GM12878 (cell line): ENCODE measurements at regions of chr4 and their contacts with region 1.

Region 1: DNA sequence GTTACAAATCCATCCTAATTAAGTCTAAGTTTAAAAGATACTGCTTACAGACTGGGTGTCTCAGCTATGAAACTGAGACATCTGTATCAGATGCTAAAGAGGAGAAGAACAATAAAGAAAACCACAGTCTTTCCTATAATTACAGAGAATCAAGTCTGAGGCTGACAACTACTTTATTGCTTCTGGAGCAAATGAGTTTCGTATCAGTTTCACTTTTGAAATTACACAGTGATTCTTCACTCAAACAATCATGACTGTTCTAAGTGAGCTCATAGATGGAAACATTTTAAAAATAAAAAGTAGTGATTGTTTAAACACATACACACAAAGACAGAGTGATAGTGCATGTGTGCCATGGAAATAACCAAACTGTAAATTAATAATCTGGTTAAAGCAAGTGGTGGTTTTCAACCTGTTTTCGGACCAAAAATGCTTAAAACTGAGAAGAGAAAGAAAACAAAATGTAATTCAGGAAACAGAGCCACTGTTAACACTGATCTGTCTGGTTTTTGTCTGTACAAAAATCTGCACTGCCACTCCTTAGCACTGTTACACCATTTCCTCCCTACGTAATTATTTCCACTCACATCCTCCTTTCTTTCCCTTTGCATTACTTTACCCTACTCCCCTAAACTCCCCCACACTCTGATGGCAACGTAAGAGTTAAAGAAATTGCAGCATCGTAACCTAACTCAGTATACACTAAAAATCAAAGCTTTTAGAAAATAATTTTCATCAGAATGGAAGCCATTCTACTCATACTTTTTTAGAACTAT is 12.5 kb downstream of the RFC1 start:
- DNase-seq: peak; percentile 85
- ATAC-seq: peak; percentile 85
- H3K4me3 ChIP-seq: peak overlapping the region; percentile 48; the same call in 1 of the 2 replicates
- H3K27ac ChIP-seq: peak overlapping the region; percentile 70
- H3K4me1 ChIP-seq: peaks cover 42% of the 10 kb centered on the region
- H3K27me3 ChIP-seq: no peaks in the 10 kb centered on the region
- CTCF ChIP-seq: no peak
- EP300 ChIP-seq: peak; percentile 75 to 77; a peak in 3 of 4 replicates
- POLR2A ChIP-seq: no peak
- RAD21 ChIP-seq: no peak

Region 2: DNA sequence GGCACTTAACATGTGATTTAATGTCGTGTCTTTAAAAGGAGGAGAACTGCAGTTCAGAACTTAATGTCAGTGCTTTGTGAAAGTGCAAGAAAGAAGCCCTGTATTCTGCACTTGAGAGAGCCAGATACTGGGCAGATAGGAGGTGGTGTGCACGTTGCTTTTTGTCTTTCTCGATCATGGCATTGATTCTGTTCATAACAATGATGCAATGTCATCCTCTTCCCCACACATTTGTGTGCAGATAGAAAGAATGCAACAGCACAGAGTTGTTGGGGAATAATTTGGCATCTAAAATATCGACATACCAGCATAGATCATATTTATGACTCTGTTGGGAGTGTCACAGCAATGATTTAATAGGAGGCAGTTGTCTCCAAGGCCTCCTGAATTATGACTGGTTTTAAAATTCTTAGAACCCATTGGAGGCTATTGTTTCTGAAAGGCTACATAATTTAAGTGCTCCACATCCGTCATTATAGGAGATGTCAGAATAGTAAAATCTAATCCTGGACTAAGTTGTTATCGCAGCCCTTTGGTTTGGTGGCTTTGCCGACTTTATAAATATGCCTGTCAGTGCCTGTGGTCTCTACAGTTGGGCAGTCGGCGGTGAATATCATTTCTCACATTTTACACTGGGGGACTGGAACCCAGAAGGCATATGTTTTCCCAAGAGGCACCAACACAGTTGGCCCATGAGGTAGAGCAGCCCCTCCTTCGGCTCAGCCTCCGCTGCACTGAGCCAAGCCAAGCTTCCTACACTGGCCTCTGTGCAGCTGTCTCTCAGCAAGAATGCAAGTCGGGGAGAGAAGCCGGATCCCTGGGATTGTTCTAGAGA is 1268.6 kb before region 1 on chr4:
- CTCF ChIA-PET with region 1: no interaction called
- POLR2A ChIA-PET with region 1: no interaction called
- RAD21 ChIA-PET with region 1: no interaction called
- SMC1A ChIA-PET with region 1: no interaction called
- in situ Hi-C with region 1: no loop called
- intact Hi-C with region 1: no loop called
- DNase-seq: no peak
- ATAC-seq: no peak
- H3K4me3 ChIP-seq: no peak overlapping the region
- H3K27ac ChIP-seq: no peak overlapping the region
- H3K4me1 ChIP-seq: no peaks in the 10 kb centered on the region; the same call in 1 of the 2 replicates
- H3K27me3 ChIP-seq: no peaks in the 10 kb centered on the region
- CTCF ChIP-seq: no peak
- EP300 ChIP-seq: no peak
- POLR2A ChIP-seq: no peak
- RAD21 ChIP-seq: no peak

Region 3: DNA sequence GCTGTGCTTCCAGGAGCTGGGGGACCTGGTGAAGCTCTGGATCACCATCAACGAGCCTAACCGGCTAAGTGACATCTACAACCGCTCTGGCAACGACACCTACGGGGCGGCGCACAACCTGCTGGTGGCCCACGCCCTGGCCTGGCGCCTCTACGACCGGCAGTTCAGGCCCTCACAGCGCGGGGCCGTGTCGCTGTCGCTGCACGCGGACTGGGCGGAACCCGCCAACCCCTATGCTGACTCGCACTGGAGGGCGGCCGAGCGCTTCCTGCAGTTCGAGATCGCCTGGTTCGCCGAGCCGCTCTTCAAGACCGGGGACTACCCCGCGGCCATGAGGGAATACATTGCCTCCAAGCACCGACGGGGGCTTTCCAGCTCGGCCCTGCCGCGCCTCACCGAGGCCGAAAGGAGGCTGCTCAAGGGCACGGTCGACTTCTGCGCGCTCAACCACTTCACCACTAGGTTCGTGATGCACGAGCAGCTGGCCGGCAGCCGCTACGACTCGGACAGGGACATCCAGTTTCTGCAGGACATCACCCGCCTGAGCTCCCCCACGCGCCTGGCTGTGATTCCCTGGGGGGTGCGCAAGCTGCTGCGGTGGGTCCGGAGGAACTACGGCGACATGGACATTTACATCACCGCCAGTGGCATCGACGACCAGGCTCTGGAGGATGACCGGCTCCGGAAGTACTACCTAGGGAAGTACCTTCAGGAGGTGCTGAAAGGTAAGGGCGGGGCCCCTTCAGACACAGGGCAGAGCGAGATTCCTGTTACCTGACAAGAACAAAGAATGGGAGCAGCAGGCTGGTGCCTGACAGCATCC is 93.3 kb after region 1 on chr4:
- CTCF ChIA-PET with region 1: no interaction called
- POLR2A ChIA-PET with region 1: interaction called, 3 read pairs
- RAD21 ChIA-PET with region 1: no interaction called
- SMC1A ChIA-PET with region 1: interaction called, 4 read pairs
- in situ Hi-C with region 1: no loop called
- intact Hi-C with region 1: loop called (anchors 5 kb)
- DNase-seq: peak; percentile 48
- ATAC-seq: peak; percentile 95
- H3K4me3 ChIP-seq: peak overlapping the region; percentile 18; the same call in 1 of the 2 replicates
- H3K27ac ChIP-seq: no peak overlapping the region
- H3K4me1 ChIP-seq: peaks cover 4% of the 10 kb centered on the region; the same call in 1 of the 2 replicates
- H3K27me3 ChIP-seq: no peaks in the 10 kb centered on the region
- CTCF ChIP-seq: peak; percentile 35 to 52 (median 39); a peak in 4 of 6 replicates
- EP300 ChIP-seq: no peak
- POLR2A ChIP-seq: peak; percentile 68
- RAD21 ChIP-seq: peak; percentile 47